ENCODE measurements at regions of chrX and their contacts with region 1.

Region 1: GRCh38 chrX:108138814-108139702 is 47.5 kb downstream of the ATG4A start:
- DNase-seq: no peak
- ATAC-seq: no peak

Region 2: GRCh38 chrX:108070891-108071290 is 68.2 kb before region 1 on chrX:
- intact Hi-C with region 1: loop called in 1 of 2 experiments (anchors 5 kb)
- DNase-seq: no peak
- ATAC-seq: peak in 1 of 2 donors; percentile 54

Measured in left cardiac atrium (tissue), 4 donors.